Natural killer cell (primary cell): ENCODE measurements at regions of chr3 and their contacts with region 1.

Region 1: GRCh38 chr3:12719984-12720898 is 38.8 kb downstream of the TMEM40 start:
- DNase-seq: peak; percentile 59 to 89
- ATAC-seq: peak; percentile 97 to 99 (median 98)
- H3K4me3 ChIP-seq: no peak overlapping the region
- H3K4me3 Mint-ChIP-seq: peak overlapping the region; percentile 56
- H3K27ac ChIP-seq: no peak overlapping the region
- H3K27ac Mint-ChIP-seq: peak overlapping the region; percentile 43 to 85
- H3K4me1 ChIP-seq: peaks cover 7% of the 10 kb centered on the region
- H3K4me1 Mint-ChIP-seq: peaks cover 13 to 15% of the 10 kb centered on the region in 2 donors
- H3K27me3 ChIP-seq: no peaks in the 10 kb centered on the region
- H3K27me3 Mint-ChIP-seq: peaks cover 0 to 5% of the 10 kb centered on the region in 2 donors
- CTCF ChIP-seq: peak; percentile 92

Region 2: DNA sequence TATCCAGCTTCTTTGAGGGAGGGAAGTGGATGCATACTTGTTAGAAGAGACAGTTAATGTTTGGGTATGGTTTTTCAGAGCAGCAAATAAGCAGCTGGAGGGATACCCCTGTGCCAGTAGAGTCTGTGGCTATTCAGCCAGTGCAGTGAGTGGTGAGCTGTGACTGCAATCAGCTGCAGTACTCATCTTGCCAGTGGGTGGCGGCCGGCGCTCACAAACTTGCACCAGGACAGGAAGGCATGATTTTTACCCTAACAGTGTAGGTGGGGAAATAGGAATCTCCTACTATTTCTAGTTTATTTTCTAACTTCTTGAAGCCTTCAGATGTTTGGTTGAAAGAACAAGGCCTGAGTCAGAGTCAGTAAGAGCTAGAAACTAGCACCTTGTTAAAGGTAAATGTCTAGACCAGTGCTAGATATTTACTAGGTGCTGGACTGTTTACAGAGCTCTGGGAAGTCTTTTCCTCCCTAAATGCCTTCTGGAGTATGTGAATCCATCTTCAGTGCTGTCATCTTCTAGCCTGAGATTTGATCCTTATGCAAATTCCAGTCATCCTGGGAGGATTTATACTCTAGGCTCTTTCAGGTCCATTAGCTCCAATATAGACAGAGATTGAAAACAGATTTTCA is 585.1 kb before region 1 on chr3:
- intact Hi-C with region 1: loop called (anchors 10 kb)
- DNase-seq: peak; percentile 22 to 71
- ATAC-seq: peak; percentile 59 to 75 (median 74)
- H3K4me3 ChIP-seq: no peak overlapping the region
- H3K4me3 Mint-ChIP-seq: no peak overlapping the region
- H3K27ac ChIP-seq: no peak overlapping the region
- H3K27ac Mint-ChIP-seq: no peak overlapping the region
- H3K4me1 ChIP-seq: no peaks in the 10 kb centered on the region
- H3K4me1 Mint-ChIP-seq: no peaks in the 10 kb centered on the region
- H3K27me3 ChIP-seq: no peaks in the 10 kb centered on the region
- H3K27me3 Mint-ChIP-seq: peaks cover 16 to 17% of the 10 kb centered on the region in 2 donors
- CTCF ChIP-seq: peak; percentile 47

Region 3: DNA sequence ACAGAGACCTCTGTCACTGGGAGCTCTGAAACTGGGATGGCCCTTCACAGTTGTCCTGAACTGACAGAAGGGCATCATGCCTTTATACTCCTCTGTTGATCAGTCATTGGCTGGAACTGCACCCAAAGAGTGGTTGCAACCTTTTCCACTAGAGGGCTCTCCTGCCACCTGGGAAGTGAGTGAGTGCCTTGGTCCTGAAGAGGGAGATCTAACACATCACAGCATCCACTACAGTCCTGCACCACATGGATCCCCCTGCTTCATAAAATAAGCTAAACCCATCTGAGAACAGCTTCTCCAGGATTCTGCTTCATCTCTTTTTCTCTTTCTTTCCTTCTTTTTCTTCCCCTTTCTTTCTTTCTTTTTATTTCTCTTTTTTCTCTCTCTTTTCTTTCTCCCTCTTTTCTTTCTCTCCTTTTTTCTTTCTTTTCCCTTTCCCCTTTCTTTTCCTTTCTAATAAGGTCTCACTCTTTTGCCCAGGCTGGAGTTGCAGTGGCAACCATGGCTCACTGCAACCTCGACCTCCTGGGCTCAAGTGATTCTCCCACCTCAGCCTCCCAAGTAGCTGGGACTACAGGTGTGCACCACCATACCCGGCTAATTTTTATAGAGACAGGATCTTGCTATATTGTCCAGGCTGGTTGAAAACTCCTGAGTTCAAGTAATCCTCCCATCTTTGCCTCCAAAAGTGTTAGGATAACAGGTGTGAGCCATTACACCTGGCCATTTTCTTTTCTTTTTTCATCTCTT is 13.6 kb before region 1 on chr3:
- intact Hi-C with region 1: loop called (anchors 1 kb)
- DNase-seq: peak; percentile 43 to 74
- ATAC-seq: peak; percentile 87 to 99 (median 99)
- H3K4me3 ChIP-seq: no peak overlapping the region
- H3K4me3 Mint-ChIP-seq: no peak overlapping the region
- H3K27ac ChIP-seq: no peak overlapping the region
- H3K27ac Mint-ChIP-seq: no peak overlapping the region
- H3K4me1 ChIP-seq: no peaks in the 10 kb centered on the region
- H3K4me1 Mint-ChIP-seq: no peaks in the 10 kb centered on the region
- H3K27me3 ChIP-seq: no peaks in the 10 kb centered on the region
- H3K27me3 Mint-ChIP-seq: peaks cover 10 to 47% of the 10 kb centered on the region in 2 donors
- CTCF ChIP-seq: peak; percentile 78